ENCODE measurements at regions of chr1 and their contacts with region 1.

Region 1: GRCh38 chr1:89843281-89844121 is 22.7 kb downstream of the LRRC8D start:
- DNase-seq: peak; percentile 73 to 87 (median 81)
- H3K4me3 ChIP-seq: peak overlapping the region; percentile 63 to 94 (median 87)
- H3K27ac ChIP-seq: peak overlapping the region in 1 of 2 experiments; percentile 66
- H3K4me1 ChIP-seq: peaks cover 13 to 58% (median 39%) of the 10 kb centered on the region in 4 experiments
- H3K27me3 ChIP-seq: no peaks in the 10 kb centered on the region

Region 2: DNA sequence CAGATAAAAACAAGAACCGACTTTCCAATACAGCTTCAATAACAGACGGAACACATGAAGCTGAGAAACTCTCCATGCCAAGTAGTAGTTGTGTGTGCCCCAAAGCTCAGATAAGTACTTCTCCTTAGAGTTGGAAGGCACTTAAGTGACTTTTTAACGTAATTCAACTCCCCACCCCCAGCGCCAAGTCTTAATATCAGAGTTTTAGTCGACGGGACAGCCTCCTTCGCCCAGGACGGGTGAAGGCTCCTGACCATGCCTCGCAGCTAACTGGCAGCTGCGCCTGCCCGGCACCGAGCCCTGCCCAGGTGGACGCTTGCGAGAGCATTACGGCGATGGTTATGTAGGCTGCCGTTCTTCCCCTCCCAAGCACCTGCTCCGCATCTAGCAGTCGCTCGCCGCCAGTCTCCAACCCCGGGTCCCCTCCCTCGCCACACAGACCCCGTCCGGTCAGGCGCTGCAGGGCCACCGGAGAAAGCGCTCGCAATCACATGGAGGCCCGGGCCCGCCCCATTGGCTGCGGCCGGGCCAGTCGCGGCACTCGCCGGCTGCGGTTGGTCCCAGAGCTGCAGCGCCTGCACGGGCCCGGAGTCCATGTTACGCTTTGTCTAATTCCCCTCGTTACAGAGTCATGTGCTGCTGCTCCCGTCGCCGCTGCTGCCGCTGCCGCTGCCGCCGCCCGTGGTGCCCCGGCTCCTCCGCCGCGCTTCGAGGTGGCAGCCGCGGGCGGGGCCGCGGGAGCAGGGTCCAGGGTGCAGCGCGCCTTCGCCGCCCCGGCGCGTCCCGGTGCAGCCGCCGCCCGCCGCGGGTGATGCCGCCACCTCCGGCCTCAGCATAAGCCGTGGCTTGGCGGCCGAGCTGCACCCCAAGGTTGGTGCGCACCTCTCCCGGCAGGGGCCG is 22.8 kb before region 1 on chr1 and contains the start of gene LRRC8D:
- CTCF ChIA-PET with region 1: interaction called, 21 read pairs
- POLR2A ChIA-PET with region 1: interaction called, 3 read pairs
- DNase-seq: peak; percentile 74 to 89 (median 83)
- H3K4me3 ChIP-seq: peak within 1 kb of the TSS; percentile 48 to 86 (median 78)
- H3K27ac ChIP-seq: peak within 1 kb of the TSS; percentile 28 to 89
- H3K4me1 ChIP-seq: peaks cover 26 to 50% (median 37%) of the 10 kb centered on the region in 4 experiments
- H3K27me3 ChIP-seq: no peaks in the 10 kb centered on the region

Region 3: GRCh38 chr1:89855413-89856123 is 12.1 kb after region 1 on chr1:
- CTCF ChIA-PET with region 1: interaction called, 14 read pairs
- POLR2A ChIA-PET with region 1: interaction called, 3 read pairs
- DNase-seq: peak in 2 of 3 donors; percentile 48 to 58
- H3K4me3 ChIP-seq: peak overlapping the region in 1 of 7 experiments; percentile 31
- H3K27ac ChIP-seq: peak overlapping the region in 1 of 2 experiments; percentile 15
- H3K4me1 ChIP-seq: peaks cover 6 to 21% (median 10%) of the 10 kb centered on the region in 4 experiments
- H3K27me3 ChIP-seq: no peaks in the 10 kb centered on the region

Region 4: GRCh38 chr1:89953072-89953626 is 109.6 kb after region 1 on chr1:
- CTCF ChIA-PET with region 1: interaction called, 10 read pairs
- POLR2A ChIA-PET with region 1: interaction called, 6 read pairs
- DNase-seq: peak; percentile 48 to 92 (median 84)
- H3K4me3 ChIP-seq: no peak overlapping the region
- H3K27ac ChIP-seq: no peak overlapping the region
- H3K4me1 ChIP-seq: peaks cover 4 to 26% (median 21%) of the 10 kb centered on the region in 4 experiments
- H3K27me3 ChIP-seq: no peaks in the 10 kb centered on the region